ENCODE measurements at regions of chr12 and their contacts with region 1.

Region 1: GRCh38 chr12:120437754-120438494 is at the start of gene COX6A1:
- DNase-seq: peak; percentile 77 to 99 (median 96)
- ATAC-seq: peak; percentile 96
- H3K4me3 ChIP-seq: peak within 1 kb of the TSS; percentile 63
- H3K4me3 Mint-ChIP-seq: peak within 1 kb of the TSS; percentile 87 to 100 (median 96)
- H3K27ac ChIP-seq: peak within 1 kb of the TSS; percentile 83
- H3K27ac Mint-ChIP-seq: peak within 1 kb of the TSS; percentile 88 to 97 (median 93)
- H3K4me1 ChIP-seq: peaks cover 15 to 20% of the 10 kb centered on the region in 2 donors
- H3K4me1 Mint-ChIP-seq: peaks cover 17 to 33% (median 30%) of the 10 kb centered on the region in 7 donors
- H3K27me3 ChIP-seq: no peaks in the 10 kb centered on the region
- H3K27me3 Mint-ChIP-seq: peaks cover 0 to 4% (median 2%) of the 10 kb centered on the region in 5 donors
- total RNA-seq, gene COX6A1: 118 to 270 (median 130) TPM

Region 2: GRCh38 chr12:120116792-120117651 is 320.9 kb before region 1 on chr12:
- CTCF ChIA-PET with region 1: no interaction called
- POLR2A ChIA-PET with region 1: no interaction called
- intact Hi-C with region 1: loop called in 1 of 2 experiments (anchors 2 kb)
- DNase-seq: peak; percentile 95 to 100 (median 98)
- ATAC-seq: peak; percentile 91
- H3K4me3 ChIP-seq: peak overlapping the region; percentile 82
- H3K4me3 Mint-ChIP-seq: peak overlapping the region; percentile 78 to 95 (median 90)
- H3K27ac ChIP-seq: peak overlapping the region; percentile 84
- H3K27ac Mint-ChIP-seq: peak overlapping the region; percentile 80 to 97 (median 90)
- H3K4me1 ChIP-seq: peaks cover 46 to 48% of the 10 kb centered on the region in 2 donors
- H3K4me1 Mint-ChIP-seq: peaks cover 64 to 86% (median 80%) of the 10 kb centered on the region in 7 donors
- H3K27me3 ChIP-seq: no peaks in the 10 kb centered on the region
- H3K27me3 Mint-ChIP-seq: no peaks in the 10 kb centered on the region

Region 3: DNA sequence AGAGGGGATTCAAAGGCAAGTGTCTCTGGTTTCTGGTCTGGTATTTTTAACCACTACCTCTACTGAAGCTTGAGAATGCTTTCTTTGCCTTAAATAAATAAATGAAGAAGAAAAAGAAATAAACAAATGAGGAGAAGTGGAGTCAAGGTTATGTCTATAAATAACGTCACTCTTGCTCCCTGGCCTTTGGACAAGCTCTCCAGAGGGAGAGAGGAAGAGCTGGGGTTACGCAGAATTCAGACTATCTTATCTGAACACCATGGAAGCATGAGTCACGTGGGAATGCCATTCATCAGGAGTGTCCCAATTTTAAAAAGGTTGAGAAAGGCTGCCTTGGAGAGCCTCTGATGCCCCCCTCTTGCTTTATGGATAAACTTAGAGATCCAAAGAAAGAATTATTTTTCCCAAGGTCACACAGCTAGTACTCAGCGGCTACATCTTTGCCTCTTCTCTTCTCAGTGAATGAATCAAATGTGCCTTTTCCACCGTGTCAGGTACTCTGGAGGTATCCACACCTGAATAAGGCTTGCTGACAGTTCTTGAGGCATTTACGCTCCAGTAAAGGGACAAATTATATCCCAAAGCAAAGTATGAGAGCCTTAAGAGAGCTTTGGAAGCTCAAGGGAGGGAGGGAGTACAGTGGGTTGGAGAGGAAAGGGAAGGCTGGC is 56.0 kb before region 1 on chr12:
- CTCF ChIA-PET with region 1: no interaction called
- POLR2A ChIA-PET with region 1: no interaction called
- intact Hi-C with region 1: no loop called
- DNase-seq: no peak
- ATAC-seq: no peak
- H3K4me3 ChIP-seq: no peak overlapping the region
- H3K4me3 Mint-ChIP-seq: no peak overlapping the region
- H3K27ac ChIP-seq: no peak overlapping the region
- H3K27ac Mint-ChIP-seq: no peak overlapping the region
- H3K4me1 ChIP-seq: no peaks in the 10 kb centered on the region
- H3K4me1 Mint-ChIP-seq: peaks cover 0 to 2% (median 0%) of the 10 kb centered on the region in 7 donors
- H3K27me3 ChIP-seq: no peaks in the 10 kb centered on the region
- H3K27me3 Mint-ChIP-seq: peaks cover 31 to 49% (median 37%) of the 10 kb centered on the region in 5 donors

Region 4: GRCh38 chr12:120469450-120470149 is 31.7 kb after region 1 on chr12 and contains the start of gene SRSF9:
- CTCF ChIA-PET with region 1: interaction called, 10 read pairs
- POLR2A ChIA-PET with region 1: interaction called, 30 read pairs
- intact Hi-C with region 1: loop called (anchors 1 kb)
- DNase-seq: peak; percentile 96 to 100 (median 97)
- ATAC-seq: peak; percentile 95
- H3K4me3 ChIP-seq: peak within 1 kb of the TSS; percentile 78
- H3K4me3 Mint-ChIP-seq: peak within 1 kb of the TSS; percentile 75 to 99 (median 90)
- H3K27ac ChIP-seq: peak within 1 kb of the TSS; percentile 86
- H3K27ac Mint-ChIP-seq: peak within 1 kb of the TSS; percentile 71 to 96 (median 86)
- H3K4me1 ChIP-seq: peaks cover 4 to 31% of the 10 kb centered on the region in 2 donors
- H3K4me1 Mint-ChIP-seq: peaks cover 34 to 65% (median 47%) of the 10 kb centered on the region in 7 donors
- H3K27me3 ChIP-seq: no peaks in the 10 kb centered on the region
- H3K27me3 Mint-ChIP-seq: peaks cover 0 to 2% (median 0%) of the 10 kb centered on the region in 5 donors
- total RNA-seq, gene SRSF9: 136 to 191 (median 145) TPM

Region 5: GRCh38 chr12:120640840-120641833 is 203.2 kb after region 1 on chr12:
- CTCF ChIA-PET with region 1: no interaction called
- POLR2A ChIA-PET with region 1: no interaction called
- intact Hi-C with region 1: loop called in 1 of 2 experiments (anchors 2 kb)
- DNase-seq: peak; percentile 28 to 66 (median 54)
- ATAC-seq: peak; percentile 81
- H3K4me3 ChIP-seq: peak overlapping the region; percentile 44
- H3K4me3 Mint-ChIP-seq: peak overlapping the region; percentile 64 to 84 (median 73)
- H3K27ac ChIP-seq: no peak overlapping the region
- H3K27ac Mint-ChIP-seq: no peak overlapping the region
- H3K4me1 ChIP-seq: peaks cover 4 to 8% of the 10 kb centered on the region in 2 donors
- H3K4me1 Mint-ChIP-seq: peaks cover 0 to 10% (median 6%) of the 10 kb centered on the region in 7 donors
- H3K27me3 ChIP-seq: peaks cover 19 to 26% of the 10 kb centered on the region in 2 donors
- H3K27me3 Mint-ChIP-seq: peaks cover 41 to 72% (median 45%) of the 10 kb centered on the region in 5 donors

Region 6: DNA sequence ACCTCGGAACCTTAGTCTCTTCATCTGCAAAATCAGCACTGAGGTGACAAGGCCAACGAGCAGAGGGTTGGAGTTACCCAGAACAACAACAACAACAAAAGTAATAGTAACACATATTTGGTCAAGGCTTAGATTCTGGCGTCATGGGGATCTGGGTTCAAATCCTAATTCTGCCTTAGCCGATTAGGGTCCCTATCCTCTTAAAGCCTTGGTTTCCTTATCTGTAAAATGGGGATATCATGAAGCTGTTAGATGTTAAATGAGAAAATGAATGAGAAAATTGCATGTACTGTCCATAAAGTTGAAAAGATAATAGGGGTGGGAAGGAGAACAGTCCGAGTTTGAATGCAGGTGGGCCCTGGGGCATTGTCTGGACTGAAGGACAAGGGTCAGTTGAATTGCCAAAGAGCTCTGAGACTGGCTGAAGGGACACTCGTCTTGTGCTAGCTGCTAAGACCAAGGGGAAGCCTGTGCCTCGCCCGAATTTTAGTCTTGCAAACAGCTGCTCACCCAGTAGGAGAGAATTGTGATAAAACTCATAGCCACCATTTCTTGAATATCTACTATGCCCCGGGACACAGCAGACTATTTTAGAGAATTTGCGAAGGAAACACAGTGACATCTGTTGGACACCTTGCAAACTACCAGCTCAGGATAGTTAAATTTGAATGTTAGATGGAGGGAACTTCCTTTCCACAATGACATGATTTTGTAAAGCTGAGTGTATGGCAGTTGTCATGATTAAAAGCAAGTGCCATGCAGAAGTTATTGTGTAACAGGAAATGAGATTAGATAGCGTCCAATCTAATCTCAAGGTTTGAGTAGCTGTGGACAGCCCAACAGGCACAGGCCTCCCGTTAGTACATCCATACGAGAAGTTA is 533.6 kb after region 1 on chr12:
- CTCF ChIA-PET with region 1: no interaction called
- POLR2A ChIA-PET with region 1: no interaction called
- intact Hi-C with region 1: loop called in 1 of 2 experiments (anchors 10 kb)
- DNase-seq: peak in 8 of 9 donors; percentile 25 to 75 (median 63)
- ATAC-seq: peak; percentile 95
- H3K4me3 ChIP-seq: no peak overlapping the region
- H3K4me3 Mint-ChIP-seq: no peak overlapping the region
- H3K27ac ChIP-seq: no peak overlapping the region
- H3K27ac Mint-ChIP-seq: peak overlapping the region in 1 of 9 donors; percentile 77
- H3K4me1 ChIP-seq: no peaks in the 10 kb centered on the region
- H3K4me1 Mint-ChIP-seq: peaks cover 0 to 8% (median 7%) of the 10 kb centered on the region in 7 donors
- H3K27me3 ChIP-seq: no peaks in the 10 kb centered on the region
- H3K27me3 Mint-ChIP-seq: peaks cover 0 to 3% (median 0%) of the 10 kb centered on the region in 5 donors